Heart left ventricle (tissue), 16 donors: ENCODE measurements at regions of chr2 and their contacts with region 1.

Region 1: DNA sequence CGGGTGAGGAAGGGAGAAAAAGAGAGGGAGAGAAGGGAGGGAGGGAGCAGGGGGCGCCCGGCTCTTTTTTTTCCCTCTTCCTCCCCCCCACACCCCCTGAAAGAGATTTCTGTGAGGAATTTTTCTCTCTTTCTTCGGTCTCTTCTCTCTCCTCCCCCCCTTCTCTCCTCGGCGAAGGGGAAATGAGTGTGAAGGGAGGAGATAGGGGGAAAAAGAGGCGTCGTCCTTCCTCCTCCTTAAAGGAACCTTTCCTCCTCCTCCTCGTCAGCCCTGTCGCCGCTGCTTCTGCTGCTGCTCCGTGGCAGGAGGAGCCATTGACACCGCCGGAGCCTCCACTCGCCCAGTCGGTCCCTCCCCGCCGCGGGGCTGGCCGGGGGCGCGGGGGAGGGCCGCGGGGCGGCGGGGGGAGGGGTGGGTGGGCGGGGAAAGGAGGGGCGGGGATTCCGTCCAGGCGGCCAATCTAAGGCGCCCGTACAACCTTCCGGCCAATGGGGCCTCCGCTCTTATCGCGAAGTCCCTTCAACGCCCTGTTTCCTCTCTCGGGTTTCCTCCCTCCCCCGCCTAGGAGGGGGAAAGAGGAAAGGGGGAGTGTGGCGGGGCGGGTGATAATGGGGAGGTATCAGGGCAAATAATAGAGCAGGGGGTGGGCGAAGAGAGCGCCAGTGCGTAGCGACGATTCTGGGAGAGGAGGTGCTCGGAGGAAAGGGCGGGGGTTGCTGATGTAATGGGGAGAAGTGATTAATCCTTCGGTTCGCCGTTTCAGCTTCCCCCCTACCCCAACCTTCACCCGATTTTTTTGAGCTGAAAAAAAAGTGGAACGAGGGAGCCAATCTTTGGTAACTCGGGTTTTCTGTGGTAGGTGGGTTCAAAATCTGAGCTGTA is at the start of gene FBXO11:
- DNase-seq: peak; percentile 97 to 98 (median 98)
- ATAC-seq: peak; percentile 95 to 98 (median 97)
- H3K4me3 ChIP-seq: peak within 1 kb of the TSS; percentile 75 to 98 (median 92)
- H3K27ac ChIP-seq: peak within 1 kb of the TSS; percentile 96 to 100 (median 99)
- H3K4me1 ChIP-seq: peaks cover 0 to 34% (median 22%) of the 10 kb centered on the region in 12 donors
- H3K27me3 ChIP-seq: no peaks in the 10 kb centered on the region
- CTCF ChIP-seq: peak in 10 of 12 donors; percentile 42 to 79 (median 64)
- POLR2A ChIP-seq: peak; percentile 16 to 77
- total RNA-seq, gene FBXO11: 26.0 to 52.4 (median 35.0) TPM

Region 2: DNA sequence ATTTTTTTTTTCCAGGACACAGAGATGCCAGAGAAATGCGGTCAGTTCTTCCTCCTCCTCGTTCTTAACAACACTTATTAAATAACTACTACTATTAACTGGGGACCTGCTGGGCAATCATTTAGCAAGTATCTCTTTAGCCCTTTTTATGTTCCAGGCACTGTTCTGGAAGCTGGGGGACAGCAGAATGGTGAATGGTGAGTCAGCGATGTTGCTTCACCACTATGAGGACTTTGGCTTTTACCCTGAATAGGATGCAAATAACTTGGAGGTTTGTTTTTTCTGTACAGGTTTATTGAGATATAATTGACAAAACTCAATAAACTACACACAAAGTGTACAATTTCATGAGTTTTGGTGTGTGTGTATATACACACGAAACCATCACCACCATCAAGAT is 303.4 kb before region 1 on chr2:
- intact Hi-C with region 1: no loop called
- DNase-seq: no peak
- ATAC-seq: no peak
- H3K4me3 ChIP-seq: no peak overlapping the region
- H3K27ac ChIP-seq: no peak overlapping the region
- H3K4me1 ChIP-seq: no peaks in the 10 kb centered on the region
- H3K27me3 ChIP-seq: no peaks in the 10 kb centered on the region
- CTCF ChIP-seq: no peak
- POLR2A ChIP-seq: no peak

Region 3: GRCh38 chr2:47803363-47803762 is 103.0 kb before region 1 on chr2:
- intact Hi-C with region 1: loop called in 1 of 10 experiments (anchors 10 kb)
- DNase-seq: no peak
- ATAC-seq: no peak
- H3K4me3 ChIP-seq: no peak overlapping the region
- H3K27ac ChIP-seq: no peak overlapping the region
- H3K4me1 ChIP-seq: peaks cover 0 to 26% (median 0%) of the 10 kb centered on the region in 12 donors
- H3K27me3 ChIP-seq: no peaks in the 10 kb centered on the region
- CTCF ChIP-seq: no peak
- POLR2A ChIP-seq: no peak

Region 4: GRCh38 chr2:47850198-47850597 is 56.2 kb before region 1 on chr2:
- intact Hi-C with region 1: loop called in 2 of 10 experiments (anchors 10 kb)
- DNase-seq: no peak
- ATAC-seq: no peak
- H3K4me3 ChIP-seq: no peak overlapping the region
- H3K27ac ChIP-seq: no peak overlapping the region
- H3K4me1 ChIP-seq: peaks cover 0 to 57% (median 19%) of the 10 kb centered on the region in 12 donors
- H3K27me3 ChIP-seq: no peaks in the 10 kb centered on the region
- CTCF ChIP-seq: no peak
- POLR2A ChIP-seq: no peak

Region 5: DNA sequence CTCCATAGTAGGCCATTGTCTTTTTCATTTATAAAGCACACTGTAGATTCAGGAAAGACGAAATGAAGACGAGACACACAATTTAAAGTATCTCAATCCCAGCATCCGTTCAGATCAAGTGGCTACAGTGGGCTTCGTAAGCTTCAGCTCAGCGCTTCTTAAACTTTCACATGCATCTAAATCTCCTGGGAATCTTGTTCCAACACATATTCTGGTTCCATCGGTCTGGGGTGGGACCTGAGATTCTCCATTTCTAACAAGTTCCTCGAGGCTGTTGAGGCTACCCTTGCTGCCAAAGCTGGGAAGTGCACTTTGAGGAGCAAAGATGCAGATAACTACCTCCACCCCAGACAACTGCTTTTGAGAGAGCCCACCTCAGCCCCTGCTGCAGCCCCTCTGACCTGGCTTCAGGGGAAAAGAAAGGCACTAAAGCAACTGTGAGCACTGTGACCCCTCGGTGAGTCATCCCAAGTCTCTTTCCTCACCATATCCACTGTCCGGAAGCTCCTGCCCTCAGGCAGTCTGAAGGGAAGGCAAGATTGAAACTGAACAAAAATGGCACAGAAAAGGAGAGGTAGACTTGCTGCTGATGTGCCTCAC is 201.0 kb after region 1 on chr2:
- intact Hi-C with region 1: loop called in 8 of 10 experiments (anchors 1 to 10 kb)
- DNase-seq: no peak
- ATAC-seq: no peak
- H3K4me3 ChIP-seq: peak overlapping the region in 2 of 12 donors; percentile 27 to 33
- H3K27ac ChIP-seq: peak overlapping the region in 10 of 12 donors; percentile 2 to 59 (median 50)
- H3K4me1 ChIP-seq: peaks cover 0 to 35% (median 12%) of the 10 kb centered on the region in 12 donors
- H3K27me3 ChIP-seq: no peaks in the 10 kb centered on the region
- CTCF ChIP-seq: no peak
- POLR2A ChIP-seq: no peak

Region 6: DNA sequence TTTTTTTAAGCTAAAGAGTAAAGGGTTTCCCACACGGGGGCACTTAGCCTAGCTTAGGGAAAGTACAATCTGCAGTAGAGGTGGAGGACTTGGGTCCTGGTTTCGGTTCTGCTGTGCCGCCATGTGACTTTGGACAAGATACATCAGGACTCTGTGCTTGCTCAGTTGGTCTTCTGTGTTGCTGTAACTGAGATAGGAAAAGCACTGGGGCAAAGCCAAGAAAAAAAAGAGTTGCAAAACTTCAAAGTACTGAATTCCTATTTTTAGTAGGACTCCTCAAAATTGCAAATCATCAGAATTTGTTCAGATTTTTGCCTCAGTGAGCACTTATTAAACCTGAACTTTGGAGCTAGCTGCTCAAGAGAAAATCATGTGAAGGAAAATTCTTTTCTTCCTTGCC is 527.3 kb after region 1 on chr2:
- intact Hi-C with region 1: loop called in 1 of 10 experiments (anchors 10 kb)
- DNase-seq: peak in 3 of 5 donors; percentile 29 to 51 (median 31)
- ATAC-seq: peak in 3 of 4 donors; percentile 65 to 81 (median 68)
- H3K4me3 ChIP-seq: peak overlapping the region in 1 of 12 donors; percentile 7
- H3K27ac ChIP-seq: peak overlapping the region in 2 of 12 donors; percentile 38 to 80
- H3K4me1 ChIP-seq: peaks cover 0 to 33% (median 0%) of the 10 kb centered on the region in 12 donors
- H3K27me3 ChIP-seq: no peaks in the 10 kb centered on the region
- CTCF ChIP-seq: no peak
- POLR2A ChIP-seq: no peak